PC-9 (cell line): ENCODE measurements at regions of chr6 and their contacts with region 1.

Region 1: DNA sequence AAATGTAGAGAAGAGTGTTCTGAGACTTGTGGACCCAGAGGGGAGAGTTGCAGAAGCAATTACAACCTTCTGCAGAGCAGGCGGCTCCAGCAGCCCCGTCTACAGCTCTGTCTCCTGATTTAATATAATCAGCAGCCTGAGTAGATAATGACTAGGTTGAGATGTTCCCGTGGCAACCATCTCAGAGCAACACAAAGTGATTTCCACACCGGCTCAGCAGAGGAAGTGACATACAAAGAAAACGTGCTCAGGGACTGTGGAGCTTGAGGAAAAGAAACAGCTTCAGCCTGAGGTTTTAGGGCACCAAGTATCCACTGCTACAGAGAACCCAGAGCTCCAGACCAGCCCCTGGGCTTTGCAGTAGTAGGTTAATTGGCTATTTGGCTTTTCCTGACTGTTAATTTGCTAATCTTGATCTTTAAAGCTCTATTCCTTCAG is 136.4 kb downstream of the MTFR2 start:
- DNase-seq: peak; percentile 3 to 49
- H3K4me3 ChIP-seq: no peak overlapping the region
- H3K27ac ChIP-seq: no peak overlapping the region
- H3K4me1 ChIP-seq: peaks cover 18% of the 10 kb centered on the region
- H3K27me3 ChIP-seq: no peaks in the 10 kb centered on the region
- CTCF ChIP-seq: no peak

Region 2: DNA sequence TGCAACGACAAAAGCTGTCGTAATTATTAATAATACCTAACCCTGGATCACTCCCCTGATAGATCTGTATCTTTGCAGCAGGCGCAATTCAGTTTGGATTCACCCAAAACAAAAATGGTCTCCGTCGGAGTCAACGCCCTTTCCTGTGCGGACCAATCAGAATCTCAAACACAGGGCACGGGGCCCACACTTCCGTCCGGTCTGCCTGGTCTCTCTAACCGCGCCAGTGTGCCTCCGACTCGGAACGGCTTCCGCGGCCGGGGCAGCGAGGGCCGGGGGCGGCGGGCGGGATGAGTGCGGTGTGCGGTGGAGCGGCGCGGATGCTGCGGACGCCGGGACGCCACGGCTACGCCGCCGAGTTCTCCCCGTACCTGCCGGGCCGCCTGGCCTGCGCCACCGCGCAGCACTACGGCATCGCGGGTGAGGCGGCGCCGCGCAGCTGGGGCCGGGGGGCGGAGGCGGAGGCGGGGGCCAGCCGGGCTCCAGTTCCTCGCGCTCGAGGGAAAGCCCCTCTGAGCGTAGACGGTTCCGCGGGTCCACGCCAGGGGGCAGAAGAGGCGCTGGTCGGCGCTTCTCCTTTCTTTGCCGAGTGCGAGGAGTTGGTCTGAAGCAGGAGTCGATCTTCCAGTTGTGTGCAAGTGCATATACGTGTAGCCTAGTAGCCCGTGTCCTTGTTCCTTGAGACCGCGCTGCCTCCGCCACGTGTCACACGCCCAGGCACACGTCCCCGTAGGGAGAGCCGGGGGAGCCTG is 708.8 kb after region 1 on chr6 and contains the start of gene PEX7:
- CTCF ChIA-PET with region 1: no interaction called
- POLR2A ChIA-PET with region 1: interaction called, 13 read pairs
- intact Hi-C with region 1: no loop called
- DNase-seq: peak; percentile 81 to 87
- H3K4me3 ChIP-seq: peak within 1 kb of the TSS; percentile 69
- H3K27ac ChIP-seq: peak within 1 kb of the TSS; percentile 47
- H3K4me1 ChIP-seq: peaks cover 15% of the 10 kb centered on the region
- H3K27me3 ChIP-seq: no peaks in the 10 kb centered on the region
- CTCF ChIP-seq: peak; percentile 72
- total RNA-seq, gene PEX7: 5.6 and 11.5 TPM in 2 replicates